ENCODE measurements at regions of chr1 and their contacts with region 1.

Region 1: GRCh38 chr1:5637171-5637570 is 355.1 kb downstream of the NPHP4 start:
- DNase-seq: peak in 4 of 10 donors; percentile 52 to 65 (median 56)
- H3K4me3 ChIP-seq: no peak overlapping the region
- H3K27ac ChIP-seq: no peak overlapping the region
- H3K27me3 ChIP-seq: peaks cover 0 to 19% (median 0%) of the 10 kb centered on the region in 45 donors
- CTCF ChIP-seq: peak in 55 of 56 donors; percentile 19 to 65 (median 46)

Region 2: DNA sequence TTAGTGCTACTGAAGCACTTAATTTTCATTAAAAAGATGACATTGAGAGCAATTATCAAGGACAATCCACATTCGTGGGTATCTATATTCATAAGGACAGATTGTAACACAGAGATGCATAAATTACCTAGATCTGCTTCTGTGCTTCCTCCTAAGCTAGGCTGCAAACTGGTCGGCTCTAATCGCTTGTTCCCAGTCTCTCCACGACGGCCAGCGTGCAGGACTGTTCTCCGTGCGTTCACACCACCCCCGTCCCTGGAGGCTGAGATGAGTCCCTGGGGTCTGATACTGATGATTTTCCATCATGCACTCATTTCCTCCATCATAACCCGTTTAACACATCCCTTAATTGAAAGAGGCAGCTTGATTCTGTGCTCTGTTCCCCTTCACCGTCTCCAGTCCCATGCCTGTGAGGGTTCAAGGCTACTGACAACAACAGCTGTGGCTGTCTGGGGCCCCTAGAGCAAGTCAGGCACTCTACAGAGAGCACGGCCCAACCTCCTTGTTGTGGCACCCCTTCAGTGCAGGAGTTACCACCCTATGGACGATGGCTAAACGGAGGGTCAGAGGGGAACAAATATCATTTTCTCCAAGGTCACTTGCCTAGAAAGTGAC is 114.5 kb before region 1 on chr1:
- intact Hi-C with region 1: no loop called
- DNase-seq: no peak
- H3K4me3 ChIP-seq: no peak overlapping the region
- H3K27ac ChIP-seq: no peak overlapping the region
- H3K27me3 ChIP-seq: peaks cover 0 to 27% (median 3%) of the 10 kb centered on the region in 45 donors
- CTCF ChIP-seq: no peak

Region 3: DNA sequence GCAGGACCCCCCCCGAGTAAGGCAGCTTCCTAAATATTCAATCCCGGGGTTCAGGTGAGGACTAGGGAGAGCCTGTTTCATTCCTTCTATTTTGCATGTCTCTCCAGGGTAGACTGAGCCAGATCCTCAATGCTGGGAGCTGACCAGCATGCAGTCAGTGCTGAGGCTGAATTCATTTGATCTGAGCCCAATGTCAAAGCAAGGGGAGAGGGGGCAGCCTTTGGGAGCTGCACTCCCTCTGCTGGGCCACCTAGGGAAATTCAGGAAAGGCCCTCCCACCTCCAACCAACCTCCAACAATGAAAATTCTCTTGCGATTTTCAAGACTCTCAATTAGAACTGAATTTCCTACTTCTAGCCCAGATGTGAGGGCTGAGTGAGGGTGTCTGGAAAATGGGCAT is 16.2 kb before region 1 on chr1:
- intact Hi-C with region 1: no loop called
- DNase-seq: no peak
- H3K4me3 ChIP-seq: no peak overlapping the region
- H3K27ac ChIP-seq: no peak overlapping the region
- H3K27me3 ChIP-seq: peaks cover 0 to 15% (median 0%) of the 10 kb centered on the region in 45 donors
- CTCF ChIP-seq: peak in 52 of 56 donors; percentile 18 to 63 (median 47)

Region 4: DNA sequence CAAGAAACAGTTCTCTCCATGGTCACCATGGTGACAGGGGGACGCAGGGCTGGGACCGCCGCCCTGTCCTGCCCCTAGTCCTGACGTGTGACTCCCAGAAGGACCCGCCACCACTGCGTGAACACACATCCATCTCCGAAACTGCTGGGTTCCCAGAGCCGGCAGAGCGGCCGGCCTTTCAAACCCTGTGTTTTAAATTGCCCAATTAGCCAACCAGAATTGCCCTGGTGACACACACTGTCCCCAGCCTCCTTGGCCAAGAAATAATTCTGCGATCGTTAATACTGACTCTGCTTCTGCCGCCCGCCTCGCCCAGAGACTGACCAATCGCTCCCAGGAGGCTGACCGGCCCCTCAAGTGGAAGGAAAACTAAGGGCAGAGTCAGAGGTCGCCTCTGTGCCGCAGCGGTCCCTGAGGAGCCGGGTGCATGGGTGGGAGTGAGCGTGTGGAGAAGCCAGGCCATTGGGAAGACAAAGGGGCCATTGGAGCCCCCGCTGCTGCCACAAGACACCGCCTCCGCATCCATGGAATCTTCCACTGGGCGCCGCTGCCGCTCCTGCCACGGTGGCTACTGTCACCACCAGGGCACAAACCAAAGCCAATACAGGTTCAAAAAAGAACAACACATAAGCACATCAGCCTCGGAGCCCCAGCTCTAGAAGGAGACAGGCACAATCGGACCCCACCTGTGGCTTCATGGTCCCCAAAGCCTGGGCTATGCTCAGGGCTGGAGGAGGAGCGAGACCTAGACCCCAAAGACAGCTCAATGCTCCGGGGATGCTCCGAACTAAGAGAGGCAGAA is 81.9 kb after region 1 on chr1:
- intact Hi-C with region 1: loop called in 1 of 2 experiments (anchors 10 kb)
- DNase-seq: peak in 1 of 10 donors; percentile 32
- H3K4me3 ChIP-seq: no peak overlapping the region
- H3K27ac ChIP-seq: no peak overlapping the region
- H3K27me3 ChIP-seq: peaks cover 0 to 19% (median 0%) of the 10 kb centered on the region in 45 donors
- CTCF ChIP-seq: peak in 3 of 56 donors; percentile 13 to 18 (median 14)

Measured in dorsolateral prefrontal cortex (tissue), 120 donors.